Esophagus muscularis mucosa (tissue), 4 donors: ENCODE measurements at regions of chr9 and their contacts with region 1.

Region 1: GRCh38 chr9:107489687-107490605 is at the start of gene KLF4:
- DNase-seq: peak; percentile 99
- H3K4me3 ChIP-seq: peak within 1 kb of the TSS; percentile 80 to 94 (median 88)
- H3K27ac ChIP-seq: peak within 1 kb of the TSS; percentile 94 to 96 (median 95)
- H3K4me1 ChIP-seq: peaks cover 21 to 54% (median 52%) of the 10 kb centered on the region in 4 donors
- H3K27me3 ChIP-seq: no peaks in the 10 kb centered on the region
- CTCF ChIP-seq: no peak
- EP300 ChIP-seq: peak; percentile 15
- POLR2A ChIP-seq: peak; percentile 81
- total RNA-seq, gene KLF4: 41.9 to 87.5 (median 63.7) TPM

Region 2: DNA sequence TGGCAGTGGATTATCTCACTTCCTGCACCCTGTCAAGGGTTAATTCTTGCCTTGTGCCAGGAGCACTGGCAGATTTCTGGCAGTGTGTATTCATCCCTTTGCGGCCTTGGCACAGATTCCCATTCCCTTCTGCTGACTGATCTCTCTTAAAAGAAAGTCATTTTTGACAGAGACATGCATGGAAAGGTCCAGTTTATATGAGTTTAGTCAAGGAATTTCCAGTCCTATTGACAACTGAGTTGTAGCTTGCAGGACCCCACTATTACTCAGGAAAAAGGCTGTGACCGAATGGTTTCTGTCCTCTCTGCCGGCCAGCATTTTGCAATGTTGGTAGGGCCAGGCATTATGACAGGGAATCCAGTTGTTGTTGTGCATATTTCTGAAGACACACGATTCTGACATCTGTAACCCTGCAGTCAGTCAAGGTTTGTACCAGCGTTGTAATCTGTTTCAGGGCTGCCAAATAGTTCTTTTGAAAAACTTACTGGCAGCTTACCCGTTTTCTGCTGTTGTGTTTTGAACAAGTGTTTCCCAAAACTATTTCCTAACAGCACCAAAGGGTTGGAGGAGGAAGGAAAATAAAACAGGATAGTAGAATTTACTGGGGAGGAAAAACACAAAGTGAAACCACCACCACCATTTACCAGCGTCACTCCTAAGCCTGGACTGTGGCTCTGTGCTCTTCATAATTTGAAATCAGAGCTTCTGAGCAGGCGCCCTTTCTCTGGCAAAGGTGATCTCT is 243.0 kb after region 1 on chr9:
- intact Hi-C with region 1: loop called (anchors 5 kb)
- DNase-seq: no peak
- H3K4me3 ChIP-seq: peak overlapping the region; percentile 8 to 38 (median 23)
- H3K27ac ChIP-seq: peak overlapping the region; percentile 72 to 81 (median 78)
- H3K4me1 ChIP-seq: peaks cover 18 to 41% (median 38%) of the 10 kb centered on the region in 4 donors
- H3K27me3 ChIP-seq: no peaks in the 10 kb centered on the region
- CTCF ChIP-seq: no peak
- EP300 ChIP-seq: no peak
- POLR2A ChIP-seq: no peak

Region 3: GRCh38 chr9:107894572-107895261 is 404.8 kb after region 1 on chr9:
- intact Hi-C with region 1: loop called (anchors 10 kb)
- DNase-seq: peak; percentile 85
- H3K4me3 ChIP-seq: no peak overlapping the region
- H3K27ac ChIP-seq: peak overlapping the region; percentile 16 to 59 (median 50)
- H3K4me1 ChIP-seq: peaks cover 0 to 18% (median 17%) of the 10 kb centered on the region in 4 donors
- H3K27me3 ChIP-seq: no peaks in the 10 kb centered on the region
- CTCF ChIP-seq: no peak
- EP300 ChIP-seq: no peak
- POLR2A ChIP-seq: no peak

Region 4: DNA sequence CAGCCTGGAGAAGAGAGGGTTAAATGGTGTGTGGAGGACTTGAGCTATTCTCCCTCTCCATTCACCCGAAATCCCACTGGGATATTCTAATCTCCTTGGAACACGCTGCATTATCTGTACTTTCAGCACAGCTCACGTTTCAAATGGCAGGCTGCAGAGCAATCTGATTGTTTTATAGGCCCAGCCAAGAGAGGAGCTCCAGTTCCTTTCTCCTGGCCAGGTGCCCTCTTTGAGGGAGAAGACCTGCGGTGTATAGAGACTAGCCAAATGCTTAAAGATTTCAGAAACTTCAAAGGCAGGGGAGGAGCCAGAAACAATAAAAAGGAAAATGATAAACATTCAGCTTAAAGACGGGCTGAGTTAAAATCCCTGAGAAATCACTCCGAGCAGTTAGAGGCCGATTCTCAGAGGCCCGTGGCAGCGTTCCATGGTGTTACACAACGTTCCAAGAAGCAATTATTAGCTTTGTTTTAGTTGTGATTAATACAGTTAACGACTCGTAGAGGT is 563.7 kb after region 1 on chr9:
- intact Hi-C with region 1: loop called (anchors 10 kb)
- DNase-seq: no peak
- H3K4me3 ChIP-seq: peak overlapping the region in 3 of 4 donors; percentile 14 to 22 (median 16)
- H3K27ac ChIP-seq: peak overlapping the region; percentile 66 to 76 (median 72)
- H3K4me1 ChIP-seq: peaks cover 19 to 53% (median 52%) of the 10 kb centered on the region in 4 donors
- H3K27me3 ChIP-seq: no peaks in the 10 kb centered on the region
- CTCF ChIP-seq: no peak
- EP300 ChIP-seq: no peak
- POLR2A ChIP-seq: no peak